ENCODE measurements at regions of chr13 and their contacts with region 1.

Region 1: GRCh38 chr13:42333613-42334328 is 61.8 kb downstream of the AKAP11 start:
- DNase-seq: no peak
- ATAC-seq: peak; percentile 77
- H3K4me3 Mint-ChIP-seq: no peak overlapping the region
- H3K27ac Mint-ChIP-seq: peak overlapping the region; percentile 53
- H3K4me1 Mint-ChIP-seq: peaks cover 60% of the 10 kb centered on the region
- H3K27me3 Mint-ChIP-seq: no peaks in the 10 kb centered on the region
- CTCF ChIP-seq: peak; percentile 64

Region 2: DNA sequence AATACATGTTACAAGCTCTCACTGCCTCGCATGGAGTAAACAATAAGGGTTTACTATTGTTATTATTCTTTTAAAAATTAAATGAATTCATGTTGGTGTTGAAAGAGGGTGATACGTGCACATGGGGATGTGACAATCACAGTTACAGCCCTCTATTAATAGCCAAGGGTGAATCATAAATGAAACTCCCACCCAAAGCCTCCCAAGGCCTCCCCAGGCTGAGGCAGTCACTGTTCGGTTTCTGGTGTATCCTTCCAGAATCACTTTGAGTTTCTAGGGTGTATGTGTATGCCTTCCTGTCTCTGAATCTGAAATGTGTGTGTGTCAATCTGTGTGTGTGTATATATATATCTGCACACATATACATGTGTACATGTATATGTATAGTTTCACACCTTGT is 11.6 kb after region 1 on chr13:
- CTCF ChIA-PET with region 1: interaction called, 10 read pairs
- POLR2A ChIA-PET with region 1: no interaction called
- intact Hi-C with region 1: no loop called
- DNase-seq: peak; percentile 39
- ATAC-seq: peak; percentile 76
- H3K4me3 Mint-ChIP-seq: no peak overlapping the region
- H3K27ac Mint-ChIP-seq: no peak overlapping the region
- H3K4me1 Mint-ChIP-seq: peaks cover 57% of the 10 kb centered on the region
- H3K27me3 Mint-ChIP-seq: no peaks in the 10 kb centered on the region
- CTCF ChIP-seq: no peak

Region 3: DNA sequence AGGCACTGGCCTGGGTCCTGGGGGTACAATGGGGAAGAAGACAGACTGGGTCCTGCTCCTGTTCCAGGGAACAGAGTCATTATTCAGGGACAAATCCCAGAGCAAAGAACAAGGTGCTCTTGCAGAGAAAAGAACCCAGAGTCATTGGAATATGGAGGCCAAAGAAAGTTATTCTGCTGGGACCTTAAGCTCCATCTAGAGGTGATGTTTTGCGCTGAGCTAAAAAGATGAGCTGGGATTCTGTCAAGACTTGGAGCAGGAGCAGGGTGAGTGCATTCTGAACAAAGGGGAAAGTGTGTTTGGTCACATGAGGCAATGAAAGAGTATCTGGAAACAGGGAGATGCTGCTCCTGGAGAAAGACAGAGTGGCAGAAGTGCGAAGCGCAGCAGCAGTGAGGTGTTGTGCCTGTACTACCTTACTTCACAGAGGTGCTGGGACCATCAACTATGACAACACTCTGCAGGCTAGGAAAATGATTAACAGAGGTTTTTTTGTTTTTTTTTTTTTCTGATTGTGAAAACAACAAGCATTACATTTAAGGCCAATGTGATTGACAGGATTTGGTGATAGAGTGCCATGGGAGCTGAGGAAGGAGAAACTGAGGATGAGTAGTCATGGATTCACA is 144.9 kb after region 1 on chr13:
- CTCF ChIA-PET with region 1: interaction called, 21 read pairs
- POLR2A ChIA-PET with region 1: no interaction called
- intact Hi-C with region 1: loop called (anchors 5 kb)
- DNase-seq: no peak
- ATAC-seq: no peak
- H3K4me3 Mint-ChIP-seq: no peak overlapping the region
- H3K27ac Mint-ChIP-seq: no peak overlapping the region
- H3K4me1 Mint-ChIP-seq: peaks cover 24% of the 10 kb centered on the region
- H3K27me3 Mint-ChIP-seq: no peaks in the 10 kb centered on the region
- CTCF ChIP-seq: peak; percentile 27

Region 4: GRCh38 chr13:42497798-42498197 is 164.0 kb after region 1 on chr13:
- CTCF ChIA-PET with region 1: interaction called, 4 read pairs
- POLR2A ChIA-PET with region 1: no interaction called
- intact Hi-C with region 1: loop called (anchors 5 kb)
- DNase-seq: peak; percentile 53
- ATAC-seq: peak; percentile 86
- H3K4me3 Mint-ChIP-seq: no peak overlapping the region
- H3K27ac Mint-ChIP-seq: peak overlapping the region; percentile 44
- H3K4me1 Mint-ChIP-seq: peaks cover 46% of the 10 kb centered on the region
- H3K27me3 Mint-ChIP-seq: no peaks in the 10 kb centered on the region
- CTCF ChIP-seq: no peak

Measured in activated CD8-positive, alpha-beta T cell treated with anti-CD3 and anti-CD28 coated beads for 36 hours (primary cell).